ENCODE measurements at regions of chr4 and their contacts with region 1.

Region 1: GRCh38 chr4:54228056-54228527 is 1.0 kb upstream of the PDGFRA start:
- DNase-seq: peak; percentile 80
- ATAC-seq: peak; percentile 60 to 67

Region 2: GRCh38 chr4:53196882-53197771 is 1031.0 kb before region 1 on chr4:
- intact Hi-C with region 1: loop called (anchors 5 kb)
- DNase-seq: no peak
- ATAC-seq: peak; percentile 65 to 70

Region 3: GRCh38 chr4:53702334-53703266 is 525.5 kb before region 1 on chr4:
- intact Hi-C with region 1: loop called in 1 of 2 experiments (anchors 10 kb)
- DNase-seq: peak; percentile 91
- ATAC-seq: peak; percentile 92 to 97

Region 4: DNA sequence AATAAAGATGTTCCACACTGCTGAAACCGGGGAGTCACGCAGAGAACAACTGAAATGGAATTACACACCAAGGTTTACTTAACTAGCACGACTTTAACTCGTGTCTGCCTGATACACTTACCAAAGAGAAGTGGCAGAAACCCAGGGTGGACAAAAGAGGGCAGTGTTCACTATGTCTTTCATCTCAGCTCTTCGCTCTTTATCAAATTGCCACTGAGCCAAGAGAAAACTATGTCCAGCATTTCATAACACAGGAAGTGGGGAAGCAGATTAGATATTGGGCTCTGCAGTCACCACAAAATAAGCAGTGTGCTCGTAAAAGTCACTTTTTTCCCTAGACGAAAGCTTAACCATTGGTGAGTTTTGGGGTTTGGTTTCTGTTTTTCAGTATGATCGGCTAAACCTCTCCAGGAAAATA is 319.4 kb before region 1 on chr4:
- intact Hi-C with region 1: loop called in 1 of 2 experiments (anchors 5 kb)
- DNase-seq: no peak
- ATAC-seq: peak; percentile 87 to 92

Measured in left cardiac atrium (tissue), 4 donors.